ENCODE measurements at regions of chr17 and their contacts with region 1.

Region 1: GRCh38 chr17:38922538-38923297 is 2.7 kb upstream of the LASP1NB start:
- DNase-seq: peak in 1 of 2 experiments; percentile 63
- H3K4me3 ChIP-seq: no peak overlapping the region
- H3K27ac ChIP-seq: peak overlapping the region; percentile 53; the same call in 1 of the 2 replicates
- H3K4me1 ChIP-seq: peaks cover 0 to 13% (median 9%) of the 10 kb centered on the region in 4 experiments; a peak in 6 of 7 replicates
- H3K27me3 ChIP-seq: no peaks in the 10 kb centered on the region
- CTCF ChIP-seq: peak in 2 of 3 experiments; percentile 4 to 21; a peak in 2 of 4 replicates
- EP300 ChIP-seq: no peak
- POLR2A ChIP-seq: no peak
- RAD21 ChIP-seq: peak in 1 of 2 experiments; percentile 1; a peak in 2 of 4 replicates

Region 2: DNA sequence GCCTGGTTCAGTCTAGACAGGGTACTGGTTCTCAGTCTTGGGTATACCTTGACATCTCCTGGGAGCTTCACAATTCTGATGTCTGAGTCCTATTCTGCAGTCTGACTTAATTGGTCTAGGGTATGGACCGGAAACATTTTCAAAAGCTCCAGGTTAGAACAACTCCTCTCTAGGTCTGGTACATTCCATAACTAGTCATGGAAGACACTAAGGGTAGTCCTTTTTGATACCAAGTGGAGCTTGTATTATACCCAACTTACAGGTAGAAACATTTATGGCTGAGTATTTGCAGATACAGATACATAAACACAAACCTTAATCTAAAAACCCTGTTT is 74.2 kb before region 1 on chr17:
- CTCF ChIA-PET with region 1: interaction called, 10 read pairs
- POLR2A ChIA-PET with region 1: interaction called, 51 read pairs
- DNase-seq: no peak
- H3K4me3 ChIP-seq: no peak overlapping the region
- H3K27ac ChIP-seq: no peak overlapping the region
- H3K4me1 ChIP-seq: peaks cover 3 to 10% (median 5%) of the 10 kb centered on the region in 4 experiments; a peak in 5 of 7 replicates
- H3K27me3 ChIP-seq: no peaks in the 10 kb centered on the region
- CTCF ChIP-seq: no peak
- EP300 ChIP-seq: no peak
- POLR2A ChIP-seq: peak in 1 of 2 experiments; percentile 70; a peak in 1 of 3 replicates
- RAD21 ChIP-seq: no peak

Region 3: GRCh38 chr17:38879878-38880682 is 42.6 kb before region 1 on chr17:
- CTCF ChIA-PET with region 1: interaction called, 26 read pairs
- POLR2A ChIA-PET with region 1: interaction called, 5 read pairs
- DNase-seq: peak; percentile 79 to 91
- H3K4me3 ChIP-seq: peak overlapping the region in 3 of 4 experiments; percentile 7 to 43 (median 20); a peak in 5 of 8 replicates
- H3K27ac ChIP-seq: peak overlapping the region; percentile 72; the same call in 1 of the 2 replicates
- H3K4me1 ChIP-seq: peaks cover 31 to 51% (median 37%) of the 10 kb centered on the region in 4 experiments
- H3K27me3 ChIP-seq: no peaks in the 10 kb centered on the region
- CTCF ChIP-seq: no peak
- EP300 ChIP-seq: peak in 1 of 2 experiments; percentile 42; a peak in 1 of 3 replicates
- POLR2A ChIP-seq: no peak
- RAD21 ChIP-seq: peak in 1 of 2 experiments; percentile 5; a peak in 1 of 4 replicates

Region 4: GRCh38 chr17:38912221-38912813 is 10.4 kb before region 1 on chr17:
- CTCF ChIA-PET with region 1: interaction called, 40 read pairs
- POLR2A ChIA-PET with region 1: interaction called, 50 read pairs
- DNase-seq: no peak
- H3K4me3 ChIP-seq: no peak overlapping the region
- H3K27ac ChIP-seq: no peak overlapping the region
- H3K4me1 ChIP-seq: peaks cover 0 to 6% (median 2%) of the 10 kb centered on the region in 4 experiments; a peak in 2 of 7 replicates
- H3K27me3 ChIP-seq: no peaks in the 10 kb centered on the region
- CTCF ChIP-seq: no peak
- EP300 ChIP-seq: no peak
- POLR2A ChIP-seq: no peak
- RAD21 ChIP-seq: no peak

Region 5: DNA sequence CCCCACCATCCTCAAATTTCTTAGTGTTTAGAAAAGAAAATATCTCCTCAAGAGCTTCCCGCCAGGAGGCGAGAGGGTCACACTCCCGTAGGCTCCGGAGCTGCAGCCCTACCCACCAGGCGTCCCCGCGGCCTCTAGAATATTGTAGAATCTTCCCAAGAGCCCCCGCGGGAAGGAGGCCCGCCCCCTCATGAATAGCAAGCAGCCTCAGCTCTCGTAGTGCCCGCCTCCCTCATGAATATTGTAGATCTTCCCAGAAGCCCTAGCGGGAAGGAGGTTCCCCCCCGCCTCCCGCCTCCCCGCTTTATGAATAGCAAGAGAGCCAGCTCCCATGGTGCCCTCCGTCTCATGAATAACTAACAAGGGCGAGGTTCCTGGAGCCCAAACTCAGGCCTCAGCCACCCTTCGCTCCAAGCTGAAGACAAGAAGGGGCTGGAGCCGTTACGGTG is 44.6 kb after region 1 on chr17 and contains the start of gene FBXO47:
- CTCF ChIA-PET with region 1: interaction called, 22 read pairs
- POLR2A ChIA-PET with region 1: interaction called, 13 read pairs
- DNase-seq: peak; percentile 92 to 94
- H3K4me3 ChIP-seq: peak within 1 kb of the TSS in 3 of 4 experiments; percentile 5 to 47 (median 23); a peak in 5 of 8 replicates
- H3K27ac ChIP-seq: peak within 1 kb of the TSS; percentile 71
- H3K4me1 ChIP-seq: peaks cover 0 to 2% (median 1%) of the 10 kb centered on the region in 4 experiments; a peak in 3 of 7 replicates
- H3K27me3 ChIP-seq: no peaks in the 10 kb centered on the region
- CTCF ChIP-seq: peak in 2 of 3 experiments; percentile 24 to 26; a peak in 2 of 4 replicates
- EP300 ChIP-seq: no peak
- POLR2A ChIP-seq: peak; percentile 34 to 64; a peak in 2 of 3 replicates
- RAD21 ChIP-seq: peak; percentile 34 to 47; a peak in 3 of 4 replicates
- total RNA-seq, gene FBXO47: not detected in 2 replicates

Region 6: GRCh38 chr17:38994026-38994425 is 71.3 kb after region 1 on chr17:
- CTCF ChIA-PET with region 1: no interaction called
- POLR2A ChIA-PET with region 1: no interaction called
- DNase-seq: no peak
- H3K4me3 ChIP-seq: no peak overlapping the region
- H3K27ac ChIP-seq: no peak overlapping the region
- H3K4me1 ChIP-seq: no peaks in the 10 kb centered on the region
- H3K27me3 ChIP-seq: no peaks in the 10 kb centered on the region
- CTCF ChIP-seq: no peak
- EP300 ChIP-seq: no peak
- POLR2A ChIP-seq: no peak
- RAD21 ChIP-seq: no peak